ENCODE measurements at regions of chr1 and their contacts with region 1.

Region 1: GRCh38 chr1:110619412-110620249 is 13.5 kb upstream of the KCNA2 start:
- DNase-seq: peak; percentile 51 to 98 (median 86)
- ATAC-seq: peak; percentile 97
- H3K4me3 ChIP-seq: peak overlapping the region; percentile 3 to 30
- H3K27ac ChIP-seq: peak overlapping the region in 1 of 2 donors; percentile 20
- H3K4me1 ChIP-seq: peaks cover 0 to 9% of the 10 kb centered on the region in 2 donors
- H3K27me3 ChIP-seq: peaks cover 0 to 38% of the 10 kb centered on the region in 2 donors
- CTCF ChIP-seq: peak; percentile 92 to 94

Region 2: GRCh38 chr1:110524311-110525251 is 95.0 kb before region 1 on chr1:
- intact Hi-C with region 1: loop called in 1 of 2 experiments (anchors 5 kb)
- DNase-seq: peak in 3 of 4 donors; percentile 22 to 50 (median 46)
- ATAC-seq: peak; percentile 83
- H3K4me3 ChIP-seq: no peak overlapping the region
- H3K27ac ChIP-seq: no peak overlapping the region
- H3K4me1 ChIP-seq: no peaks in the 10 kb centered on the region
- H3K27me3 ChIP-seq: peaks cover 0 to 67% of the 10 kb centered on the region in 2 donors
- CTCF ChIP-seq: peak; percentile 47 to 49

Region 3: GRCh38 chr1:110551278-110551809 is 68.3 kb before region 1 on chr1:
- intact Hi-C with region 1: loop called in 1 of 2 experiments (anchors 2 kb)
- DNase-seq: no peak
- ATAC-seq: no peak
- H3K4me3 ChIP-seq: no peak overlapping the region
- H3K27ac ChIP-seq: no peak overlapping the region
- H3K4me1 ChIP-seq: peaks cover 0 to 10% of the 10 kb centered on the region in 2 donors
- H3K27me3 ChIP-seq: peaks cover 9 to 55% of the 10 kb centered on the region in 2 donors
- CTCF ChIP-seq: no peak

Region 4: GRCh38 chr1:110780600-110781484 is 161.2 kb after region 1 on chr1:
- intact Hi-C with region 1: loop called in 1 of 2 experiments (anchors 5 kb)
- DNase-seq: peak; percentile 47 to 80 (median 66)
- ATAC-seq: peak; percentile 90
- H3K4me3 ChIP-seq: no peak overlapping the region
- H3K27ac ChIP-seq: no peak overlapping the region
- H3K4me1 ChIP-seq: no peaks in the 10 kb centered on the region
- H3K27me3 ChIP-seq: peaks cover 0 to 16% of the 10 kb centered on the region in 2 donors
- CTCF ChIP-seq: peak; percentile 73 to 77

Region 5: GRCh38 chr1:110829955-110830553 is 210.4 kb after region 1 on chr1:
- intact Hi-C with region 1: no loop called
- DNase-seq: peak in 1 of 4 donors; percentile 1
- ATAC-seq: peak; percentile 91
- H3K4me3 ChIP-seq: no peak overlapping the region
- H3K27ac ChIP-seq: no peak overlapping the region
- H3K4me1 ChIP-seq: no peaks in the 10 kb centered on the region
- H3K27me3 ChIP-seq: no peaks in the 10 kb centered on the region
- CTCF ChIP-seq: peak; percentile 42 to 66

Measured in left lung (tissue), 14 donors.